ENCODE measurements at regions of chr19 and their contacts with region 1.

Region 1: GRCh38 chr19:6048808-6049405 is 61.4 kb downstream of the RFX2 start:
- DNase-seq: peak; percentile 80 to 81
- H3K4me3 ChIP-seq: no peak overlapping the region
- H3K27ac ChIP-seq: peak overlapping the region in 1 of 2 donors; percentile 16
- H3K4me1 ChIP-seq: no peaks in the 10 kb centered on the region
- H3K27me3 ChIP-seq: no peaks in the 10 kb centered on the region
- CTCF ChIP-seq: peak; percentile 90 to 94 (median 92)
- POLR2A ChIP-seq: no peak

Region 2: DNA sequence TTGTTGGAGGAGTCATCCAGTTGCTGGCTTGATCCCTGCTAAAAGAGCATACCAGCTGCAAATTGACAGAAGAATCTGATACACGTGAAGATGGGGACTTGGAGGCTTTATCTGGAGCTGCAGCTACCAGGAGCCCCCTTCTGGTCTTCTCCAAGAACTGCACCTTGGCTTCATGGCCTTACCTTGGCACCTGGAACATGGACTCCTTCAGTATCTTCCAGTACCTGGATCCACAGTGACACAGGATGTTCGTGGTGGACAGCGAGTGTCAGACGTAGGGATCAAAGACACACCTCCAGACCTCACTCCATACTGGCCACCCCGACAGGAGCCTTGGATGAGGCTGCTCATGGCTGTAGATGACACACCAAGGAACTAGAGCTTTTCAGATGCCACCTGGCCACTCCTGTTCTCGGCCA is 76.7 kb after region 1 on chr19:
- intact Hi-C with region 1: loop called (anchors 5 kb)
- DNase-seq: peak; percentile 44 to 61
- H3K4me3 ChIP-seq: no peak overlapping the region
- H3K27ac ChIP-seq: no peak overlapping the region
- H3K4me1 ChIP-seq: no peaks in the 10 kb centered on the region
- H3K27me3 ChIP-seq: no peaks in the 10 kb centered on the region
- CTCF ChIP-seq: peak; percentile 91 to 95 (median 94)
- POLR2A ChIP-seq: no peak

Region 3: GRCh38 chr19:6218491-6219162 is 169.7 kb after region 1 on chr19:
- intact Hi-C with region 1: loop called (anchors 5 kb)
- DNase-seq: peak; percentile 90 to 92
- H3K4me3 ChIP-seq: no peak overlapping the region
- H3K27ac ChIP-seq: peak overlapping the region; percentile 68 to 70
- H3K4me1 ChIP-seq: peaks cover 0 to 21% of the 10 kb centered on the region in 2 donors
- H3K27me3 ChIP-seq: no peaks in the 10 kb centered on the region
- CTCF ChIP-seq: peak; percentile 97 to 99 (median 98)
- POLR2A ChIP-seq: peak; percentile 21 to 33

Measured in uterus (tissue), 4 donors.